Vagina (tissue), 2 donors: ENCODE measurements at regions of chr4 and their contacts with region 1.

Region 1: DNA sequence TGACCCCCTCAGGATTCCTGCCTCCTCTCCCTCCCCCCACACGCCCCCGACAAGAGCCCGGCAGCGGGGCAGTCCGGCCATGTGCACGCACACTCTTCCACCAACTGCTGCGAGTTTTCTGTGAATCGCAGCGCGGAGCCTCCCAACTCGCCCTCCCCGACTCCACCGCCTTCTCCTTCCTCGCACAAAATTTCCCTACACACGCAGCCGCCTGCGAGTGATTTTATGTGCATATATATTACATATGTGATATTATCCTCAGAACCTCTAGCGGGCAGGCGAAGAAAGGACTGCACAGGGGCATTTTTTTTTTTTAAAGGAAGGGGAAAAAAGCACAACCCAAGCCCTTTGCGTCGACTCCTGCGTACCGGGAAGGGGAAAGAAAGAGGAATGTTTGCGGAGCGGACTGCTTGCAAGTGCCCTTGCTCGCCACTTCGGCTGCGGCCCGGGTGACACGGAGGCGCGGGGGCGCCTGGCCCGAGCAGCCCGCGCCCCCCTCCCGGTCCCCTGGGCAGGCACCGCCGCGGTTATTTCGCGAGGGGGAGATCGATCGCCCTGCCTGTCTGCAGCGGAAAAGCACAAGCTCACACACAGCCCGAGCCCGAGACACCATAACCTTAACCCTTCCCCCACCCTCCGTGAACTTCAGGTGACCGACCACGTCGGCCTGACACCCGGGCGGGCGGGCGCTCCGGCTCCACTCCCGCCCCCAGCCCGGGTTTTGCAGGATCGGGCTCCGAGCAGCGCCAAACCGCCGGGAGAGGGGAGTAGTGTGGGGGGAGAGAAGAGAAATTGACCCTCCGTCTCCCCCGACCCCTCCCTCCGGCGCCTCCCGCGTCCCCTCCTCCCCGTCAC is 2.3 kb downstream of the ZNF827 start:
- DNase-seq: no peak
- H3K4me3 ChIP-seq: peak overlapping the region; percentile 74 to 82
- H3K27ac ChIP-seq: peak overlapping the region; percentile 93
- H3K4me1 ChIP-seq: peaks cover 8% of the 10 kb centered on the region
- H3K27me3 ChIP-seq: no peaks in the 10 kb centered on the region
- CTCF ChIP-seq: no peak
- POLR2A ChIP-seq: no peak

Region 2: DNA sequence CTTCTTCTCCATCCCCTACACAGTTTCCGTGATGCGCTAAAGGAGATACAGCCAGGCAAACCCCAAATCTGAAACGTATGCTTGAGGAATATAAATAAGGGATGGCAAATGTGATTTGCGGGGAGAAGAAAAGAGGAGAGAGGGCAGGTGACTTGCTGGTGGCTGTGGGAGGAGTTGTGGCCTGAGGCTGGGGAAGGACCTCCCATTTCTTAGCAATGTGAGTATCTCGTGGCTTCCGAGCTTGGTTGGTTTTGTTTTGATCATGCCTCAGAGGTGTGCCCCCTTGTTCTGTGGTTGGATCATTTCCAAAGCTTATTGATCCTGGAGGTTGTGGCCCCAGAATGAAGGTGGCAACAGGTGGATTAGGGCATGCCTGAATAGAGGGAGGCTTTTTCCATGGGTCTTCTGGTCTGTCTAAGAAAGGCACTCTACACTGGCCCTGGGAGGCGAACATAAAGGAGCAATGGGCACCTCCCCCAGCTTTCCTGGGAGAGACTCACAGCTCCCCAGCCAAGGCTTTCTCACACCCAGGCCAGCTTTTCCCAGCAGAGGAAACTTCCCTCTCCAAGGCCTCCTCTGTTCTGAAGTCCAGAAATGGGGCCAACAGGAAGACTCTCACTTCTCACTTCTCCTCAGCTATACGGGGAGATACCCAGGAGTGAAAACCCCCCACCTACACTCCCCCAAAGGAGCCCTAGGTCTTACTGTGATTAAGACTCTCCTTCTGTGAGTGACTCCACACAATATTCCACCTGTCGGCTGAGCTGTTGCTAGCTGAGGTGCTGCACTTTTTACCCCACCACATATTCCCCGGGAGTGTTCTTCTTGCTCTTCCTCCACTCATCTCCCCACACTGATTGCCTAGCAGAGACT is 216.4 kb before region 1 on chr4:
- intact Hi-C with region 1: no loop called
- DNase-seq: peak in 1 of 2 donors; percentile 60
- H3K4me3 ChIP-seq: no peak overlapping the region
- H3K27ac ChIP-seq: no peak overlapping the region
- H3K4me1 ChIP-seq: no peaks in the 10 kb centered on the region
- H3K27me3 ChIP-seq: no peaks in the 10 kb centered on the region
- CTCF ChIP-seq: no peak
- POLR2A ChIP-seq: no peak

Region 3: GRCh38 chr4:145732895-145733880 is 203.2 kb before region 1 on chr4:
- intact Hi-C with region 1: loop called (anchors 5 kb)
- DNase-seq: no peak
- H3K4me3 ChIP-seq: peak overlapping the region; percentile 60 to 75
- H3K27ac ChIP-seq: peak overlapping the region; percentile 92
- H3K4me1 ChIP-seq: peaks cover 38% of the 10 kb centered on the region
- H3K27me3 ChIP-seq: no peaks in the 10 kb centered on the region
- CTCF ChIP-seq: no peak
- POLR2A ChIP-seq: peak; percentile 34 to 59

Region 4: GRCh38 chr4:145887241-145887991 is 49.0 kb before region 1 on chr4:
- intact Hi-C with region 1: loop called (anchors 10 kb)
- DNase-seq: no peak
- H3K4me3 ChIP-seq: no peak overlapping the region
- H3K27ac ChIP-seq: peak overlapping the region; percentile 39
- H3K4me1 ChIP-seq: peaks cover 11% of the 10 kb centered on the region
- H3K27me3 ChIP-seq: no peaks in the 10 kb centered on the region
- CTCF ChIP-seq: peak in 1 of 3 experiments; percentile 13
- POLR2A ChIP-seq: no peak

Region 5: DNA sequence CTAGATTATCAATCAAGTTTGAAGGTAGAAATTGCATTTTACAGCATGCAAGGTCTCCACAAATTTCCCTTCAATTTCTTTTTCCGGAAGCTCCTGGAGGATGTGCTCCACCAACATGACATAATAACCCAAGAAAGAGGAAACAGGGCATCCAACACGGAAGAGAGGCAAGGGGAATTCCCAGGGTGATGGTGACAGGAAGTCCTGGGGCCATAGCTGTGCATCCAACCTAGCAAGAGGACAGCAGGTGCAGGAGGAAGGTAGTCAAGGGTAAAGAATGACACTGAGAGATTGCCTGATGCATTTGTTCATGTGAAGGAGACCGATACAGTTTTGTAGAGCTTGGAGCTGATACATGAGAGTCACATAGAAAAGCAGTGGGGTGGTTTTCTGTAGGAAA is 123.5 kb after region 1 on chr4:
- intact Hi-C with region 1: no loop called
- DNase-seq: no peak
- H3K4me3 ChIP-seq: no peak overlapping the region
- H3K27ac ChIP-seq: no peak overlapping the region
- H3K4me1 ChIP-seq: no peaks in the 10 kb centered on the region
- H3K27me3 ChIP-seq: no peaks in the 10 kb centered on the region
- CTCF ChIP-seq: no peak
- POLR2A ChIP-seq: no peak

Region 6: DNA sequence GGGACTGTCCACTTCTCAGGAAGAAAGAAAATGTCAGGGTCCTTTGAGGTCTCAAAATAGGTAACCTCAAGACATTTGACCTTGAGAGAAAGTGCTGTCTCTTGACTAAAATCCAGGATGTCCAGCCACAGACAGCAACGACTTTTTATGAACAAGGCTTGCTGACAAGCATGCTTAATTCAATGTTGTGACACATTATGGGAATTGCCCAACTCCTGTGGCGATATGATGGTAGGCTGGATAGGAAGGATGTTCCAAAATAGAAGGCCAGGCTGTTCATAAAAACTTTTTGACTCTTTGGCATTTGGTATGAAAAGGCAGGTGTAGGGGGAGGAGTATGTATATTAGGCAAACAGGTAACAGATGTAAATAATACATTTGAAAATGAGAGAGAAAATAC is 1493.7 kb after region 1 on chr4:
- intact Hi-C with region 1: no loop called
- DNase-seq: no peak
- H3K4me3 ChIP-seq: no peak overlapping the region
- H3K27ac ChIP-seq: no peak overlapping the region
- H3K4me1 ChIP-seq: no peaks in the 10 kb centered on the region
- H3K27me3 ChIP-seq: no peaks in the 10 kb centered on the region
- CTCF ChIP-seq: no peak
- POLR2A ChIP-seq: no peak